ENCODE measurements at regions of chr2 and their contacts with region 1.

Region 1: DNA sequence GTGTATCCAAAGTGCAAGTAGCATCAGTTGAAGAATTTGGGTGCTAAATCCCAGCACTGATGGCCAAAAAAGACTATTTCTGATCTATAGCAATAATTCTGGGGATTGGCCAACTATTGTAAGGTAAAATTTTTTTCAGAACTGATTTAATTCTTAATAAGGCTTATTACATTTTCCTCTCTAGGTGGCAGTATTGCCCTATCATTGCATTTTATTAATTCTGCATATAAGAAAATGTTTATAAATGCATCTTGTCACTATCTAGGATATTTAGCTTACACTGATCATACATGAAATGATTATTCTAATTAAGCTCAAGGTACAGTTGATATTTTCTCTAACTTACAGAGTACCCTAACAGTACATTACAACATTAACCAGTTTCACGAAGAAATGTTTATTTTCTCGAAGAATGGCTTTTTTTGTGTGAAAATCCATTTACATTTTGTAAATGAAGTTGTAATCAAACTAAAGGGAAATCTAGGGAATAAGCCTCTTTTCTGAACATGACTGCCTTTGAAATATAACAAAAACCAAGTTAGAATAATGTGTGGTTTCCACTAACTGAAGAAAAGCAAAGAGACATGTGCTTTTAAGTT is 11.0 kb downstream of the TTN start:
- DNase-seq: peak; percentile 32
- H3K4me3 ChIP-seq: no peak overlapping the region
- H3K27ac ChIP-seq: no peak overlapping the region
- H3K4me1 ChIP-seq: no peaks in the 10 kb centered on the region
- H3K27me3 ChIP-seq: no peaks in the 10 kb centered on the region
- CTCF ChIP-seq: peak; percentile 85
- EP300 ChIP-seq: no peak
- RAD21 ChIP-seq: peak; percentile 81

Region 2: DNA sequence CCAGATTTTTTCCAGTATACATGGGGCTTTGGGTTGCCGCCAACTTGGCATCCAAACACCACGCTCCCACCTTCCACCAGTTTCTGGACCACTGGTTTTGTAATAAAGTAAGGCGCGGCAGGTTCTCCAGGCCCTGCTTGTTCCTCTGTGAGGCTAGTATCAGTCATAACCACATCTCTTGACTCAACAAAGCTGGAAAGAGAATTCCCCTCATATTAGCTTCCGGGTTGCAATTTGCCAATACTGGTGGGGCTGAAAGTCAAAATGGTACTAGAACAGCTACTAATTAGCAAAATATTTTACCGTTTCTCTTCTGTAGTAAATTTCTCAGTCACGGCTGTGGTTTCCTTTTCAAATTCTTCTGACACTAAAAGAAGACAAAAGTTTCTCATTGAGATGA is 13.9 kb before region 1 on chr2:
- CTCF ChIA-PET with region 1: interaction called, 28 read pairs
- POLR2A ChIA-PET with region 1: no interaction called
- DNase-seq: no peak
- H3K4me3 ChIP-seq: no peak overlapping the region
- H3K27ac ChIP-seq: no peak overlapping the region
- H3K4me1 ChIP-seq: no peaks in the 10 kb centered on the region
- H3K27me3 ChIP-seq: no peaks in the 10 kb centered on the region
- CTCF ChIP-seq: no peak
- EP300 ChIP-seq: no peak
- RAD21 ChIP-seq: no peak

Region 3: GRCh38 chr2:178811901-178812300 is 15.7 kb after region 1 on chr2:
- CTCF ChIA-PET with region 1: interaction called, 12 read pairs
- POLR2A ChIA-PET with region 1: no interaction called
- DNase-seq: no peak
- H3K4me3 ChIP-seq: no peak overlapping the region
- H3K27ac ChIP-seq: no peak overlapping the region; a peak in 1 of 4 replicates
- H3K4me1 ChIP-seq: no peaks in the 10 kb centered on the region
- H3K27me3 ChIP-seq: no peaks in the 10 kb centered on the region
- CTCF ChIP-seq: no peak
- EP300 ChIP-seq: no peak
- RAD21 ChIP-seq: no peak

Region 4: DNA sequence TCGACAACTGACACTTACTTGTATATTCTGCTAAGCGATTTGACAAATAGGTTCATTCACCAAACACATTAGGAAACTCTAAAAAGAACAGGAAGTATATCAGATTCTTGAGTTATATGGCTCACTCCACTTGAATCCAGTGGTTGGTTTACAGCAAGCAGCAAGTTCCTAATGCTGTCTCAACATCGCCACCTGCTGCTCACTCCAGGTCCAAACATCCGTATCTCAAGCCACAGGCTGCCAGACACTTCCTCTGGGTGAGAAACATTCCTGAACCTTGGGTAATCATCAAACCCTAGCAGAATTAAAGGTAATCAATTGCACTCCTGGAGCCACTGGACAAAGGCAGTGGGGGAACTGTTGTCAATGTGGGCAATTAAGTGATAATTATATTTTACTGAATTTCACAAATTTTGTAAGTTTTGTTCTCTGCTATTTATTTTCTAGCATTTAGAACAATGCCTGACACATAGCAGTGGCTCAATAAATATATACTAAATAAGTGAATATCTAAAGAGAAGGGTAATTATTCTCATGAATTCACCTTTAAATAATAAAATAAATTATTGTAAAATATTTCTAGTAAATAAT is 118.2 kb after region 1 on chr2:
- CTCF ChIA-PET with region 1: interaction called, 96 read pairs
- POLR2A ChIA-PET with region 1: no interaction called
- DNase-seq: peak; percentile 64
- H3K4me3 ChIP-seq: peak overlapping the region in 1 of 2 experiments; percentile 34; a peak in 1 of 4 replicates
- H3K27ac ChIP-seq: no peak overlapping the region
- H3K4me1 ChIP-seq: peaks cover 0 to 6% of the 10 kb centered on the region in 2 experiments; a peak in 2 of 4 replicates
- H3K27me3 ChIP-seq: no peaks in the 10 kb centered on the region
- CTCF ChIP-seq: peak; percentile 90
- EP300 ChIP-seq: no peak
- RAD21 ChIP-seq: peak; percentile 92

Region 5: DNA sequence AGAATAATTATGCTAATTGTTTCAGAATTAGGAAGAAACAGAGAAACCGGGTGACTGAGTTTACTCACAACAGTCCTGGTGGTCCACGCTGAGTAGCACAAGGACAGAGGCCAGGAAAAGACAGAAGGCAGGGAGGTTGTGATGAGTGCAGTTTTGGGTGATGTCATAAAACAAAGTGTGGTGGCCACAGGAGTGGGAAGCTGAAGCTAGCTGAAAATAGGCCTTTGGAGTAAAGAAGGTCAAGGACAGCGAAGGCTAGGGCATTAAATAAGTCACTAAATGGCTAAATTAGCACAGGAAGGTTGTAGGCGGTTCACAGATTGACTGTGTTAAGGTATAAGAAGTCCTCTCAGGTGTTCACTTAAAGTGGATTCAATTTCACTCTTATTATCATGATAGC is 131.9 kb after region 1 on chr2:
- CTCF ChIA-PET with region 1: interaction called, 16 read pairs
- POLR2A ChIA-PET with region 1: no interaction called
- DNase-seq: no peak
- H3K4me3 ChIP-seq: no peak overlapping the region
- H3K27ac ChIP-seq: no peak overlapping the region
- H3K4me1 ChIP-seq: no peaks in the 10 kb centered on the region
- H3K27me3 ChIP-seq: no peaks in the 10 kb centered on the region
- CTCF ChIP-seq: no peak
- EP300 ChIP-seq: no peak
- RAD21 ChIP-seq: no peak